Calu3 (cell line): ENCODE measurements at regions of chr1 and their contacts with region 1.

Region 1: DNA sequence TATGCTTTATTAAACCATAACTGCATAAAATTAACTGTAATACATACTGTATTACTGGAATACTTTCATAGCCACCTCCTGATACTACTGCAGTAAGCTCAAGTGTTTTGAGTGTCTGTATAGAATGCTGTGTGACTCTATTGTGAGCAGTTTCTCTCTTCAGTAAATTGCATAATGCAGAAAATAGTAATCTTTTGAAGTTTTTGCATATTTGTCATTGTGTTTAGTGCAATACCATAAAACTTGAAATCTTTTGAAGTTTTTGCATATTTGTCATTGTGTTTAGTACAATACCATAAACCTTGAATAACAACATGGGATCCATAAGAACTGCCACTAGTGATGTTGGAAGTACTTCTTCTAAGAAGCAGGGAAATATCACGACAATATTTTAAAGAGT is 11.2 kb downstream of the TPR start:
- DNase-seq: no peak
- H3K4me3 Mint-ChIP-seq: no peak overlapping the region
- H3K27ac Mint-ChIP-seq: no peak overlapping the region
- H3K4me1 Mint-ChIP-seq: no peaks in the 10 kb centered on the region
- H3K27me3 Mint-ChIP-seq: no peaks in the 10 kb centered on the region
- CTCF ChIP-seq: no peak

Region 2: GRCh38 chr1:186325239-186325638 is 38.7 kb before region 1 on chr1:
- CTCF ChIA-PET with region 1: no interaction called
- intact Hi-C with region 1: loop called (anchors 5 kb)
- DNase-seq: no peak
- H3K4me3 Mint-ChIP-seq: no peak overlapping the region
- H3K27ac Mint-ChIP-seq: no peak overlapping the region
- H3K4me1 Mint-ChIP-seq: no peaks in the 10 kb centered on the region
- H3K27me3 Mint-ChIP-seq: no peaks in the 10 kb centered on the region
- CTCF ChIP-seq: no peak